ENCODE measurements at regions of chr12 and their contacts with region 1.

Region 1: GRCh38 chr12:50055831-50056638 is 1.4 kb upstream of the ASIC1 start:
- DNase-seq: peak; percentile 74
- ATAC-seq: peak; percentile 46
- H3K4me3 Mint-ChIP-seq: peak overlapping the region; percentile 45
- H3K27ac Mint-ChIP-seq: peak overlapping the region; percentile 39
- H3K4me1 Mint-ChIP-seq: peaks cover 41% of the 10 kb centered on the region
- H3K27me3 Mint-ChIP-seq: peaks cover 28% of the 10 kb centered on the region
- CTCF ChIP-seq: peak; percentile 98

Region 2: GRCh38 chr12:49866859-49867579 is 189.0 kb before region 1 on chr12:
- CTCF ChIA-PET with region 1: interaction called, 10 read pairs
- POLR2A ChIA-PET with region 1: no interaction called
- intact Hi-C with region 1: no loop called
- DNase-seq: peak; percentile 85
- ATAC-seq: peak; percentile 98
- H3K4me3 Mint-ChIP-seq: no peak overlapping the region
- H3K27ac Mint-ChIP-seq: no peak overlapping the region
- H3K4me1 Mint-ChIP-seq: no peaks in the 10 kb centered on the region
- H3K27me3 Mint-ChIP-seq: no peaks in the 10 kb centered on the region
- CTCF ChIP-seq: peak; percentile 92

Region 3: GRCh38 chr12:50025187-50026059 is 30.6 kb before region 1 on chr12 and contains the start of gene RACGAP1:
- CTCF ChIA-PET with region 1: interaction called, 19 read pairs
- POLR2A ChIA-PET with region 1: interaction called, 4 read pairs
- intact Hi-C with region 1: no loop called
- DNase-seq: peak; percentile 97
- ATAC-seq: peak; percentile 99
- H3K4me3 Mint-ChIP-seq: peak within 1 kb of the TSS; percentile 93
- H3K27ac Mint-ChIP-seq: peak within 1 kb of the TSS; percentile 97
- H3K4me1 Mint-ChIP-seq: peaks cover 18% of the 10 kb centered on the region
- H3K27me3 Mint-ChIP-seq: no peaks in the 10 kb centered on the region
- CTCF ChIP-seq: no peak
- total RNA-seq, gene RACGAP1: 113 to 117 TPM

Region 4: DNA sequence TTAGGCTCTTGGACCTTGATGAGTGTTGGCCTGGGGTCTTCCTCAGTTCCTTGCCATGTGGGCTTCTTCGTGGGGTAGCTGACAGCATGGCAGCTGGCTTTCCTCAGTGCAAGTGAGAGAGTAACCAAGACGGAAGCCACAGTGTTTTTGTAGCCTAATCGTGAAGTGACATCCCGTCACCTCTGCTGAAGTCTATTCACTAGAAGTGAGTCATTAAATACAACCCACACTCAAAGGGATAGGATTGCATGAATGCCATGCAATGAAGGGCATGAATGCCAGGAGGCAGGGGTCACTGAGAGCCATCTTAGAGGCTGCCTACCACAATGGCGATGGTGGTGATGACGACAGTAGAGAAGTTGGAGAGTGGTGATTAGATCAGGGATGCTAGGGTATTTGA is 12.2 kb before region 1 on chr12:
- CTCF ChIA-PET with region 1: interaction called, 299 read pairs
- POLR2A ChIA-PET with region 1: interaction called, 9 read pairs
- intact Hi-C with region 1: loop called (anchors 2 kb)
- DNase-seq: no peak
- ATAC-seq: peak; percentile 46
- H3K4me3 Mint-ChIP-seq: no peak overlapping the region
- H3K27ac Mint-ChIP-seq: no peak overlapping the region
- H3K4me1 Mint-ChIP-seq: peaks cover 20% of the 10 kb centered on the region
- H3K27me3 Mint-ChIP-seq: peaks cover 2% of the 10 kb centered on the region
- CTCF ChIP-seq: no peak

Region 5: GRCh38 chr12:50074936-50075807 is 19.1 kb after region 1 on chr12:
- CTCF ChIA-PET with region 1: interaction called, 47 read pairs
- POLR2A ChIA-PET with region 1: no interaction called
- intact Hi-C with region 1: no loop called
- DNase-seq: peak; percentile 86
- ATAC-seq: peak; percentile 99
- H3K4me3 Mint-ChIP-seq: no peak overlapping the region
- H3K27ac Mint-ChIP-seq: no peak overlapping the region
- H3K4me1 Mint-ChIP-seq: peaks cover 4% of the 10 kb centered on the region
- H3K27me3 Mint-ChIP-seq: no peaks in the 10 kb centered on the region
- CTCF ChIP-seq: peak; percentile 91

Region 6: GRCh38 chr12:50283229-50283923 is 227.3 kb after region 1 on chr12 and contains the start of gene LIMA1:
- CTCF ChIA-PET with region 1: no interaction called
- POLR2A ChIA-PET with region 1: no interaction called
- intact Hi-C with region 1: no loop called
- DNase-seq: peak; percentile 94
- ATAC-seq: peak; percentile 95
- H3K4me3 Mint-ChIP-seq: peak within 1 kb of the TSS; percentile 88
- H3K27ac Mint-ChIP-seq: peak within 1 kb of the TSS; percentile 81
- H3K4me1 Mint-ChIP-seq: peaks cover 22% of the 10 kb centered on the region
- H3K27me3 Mint-ChIP-seq: no peaks in the 10 kb centered on the region
- CTCF ChIP-seq: peak; percentile 44
- total RNA-seq, gene LIMA1: 44.2 to 45.5 TPM